ENCODE measurements at regions of chr16 and their contacts with region 1.

Region 1: DNA sequence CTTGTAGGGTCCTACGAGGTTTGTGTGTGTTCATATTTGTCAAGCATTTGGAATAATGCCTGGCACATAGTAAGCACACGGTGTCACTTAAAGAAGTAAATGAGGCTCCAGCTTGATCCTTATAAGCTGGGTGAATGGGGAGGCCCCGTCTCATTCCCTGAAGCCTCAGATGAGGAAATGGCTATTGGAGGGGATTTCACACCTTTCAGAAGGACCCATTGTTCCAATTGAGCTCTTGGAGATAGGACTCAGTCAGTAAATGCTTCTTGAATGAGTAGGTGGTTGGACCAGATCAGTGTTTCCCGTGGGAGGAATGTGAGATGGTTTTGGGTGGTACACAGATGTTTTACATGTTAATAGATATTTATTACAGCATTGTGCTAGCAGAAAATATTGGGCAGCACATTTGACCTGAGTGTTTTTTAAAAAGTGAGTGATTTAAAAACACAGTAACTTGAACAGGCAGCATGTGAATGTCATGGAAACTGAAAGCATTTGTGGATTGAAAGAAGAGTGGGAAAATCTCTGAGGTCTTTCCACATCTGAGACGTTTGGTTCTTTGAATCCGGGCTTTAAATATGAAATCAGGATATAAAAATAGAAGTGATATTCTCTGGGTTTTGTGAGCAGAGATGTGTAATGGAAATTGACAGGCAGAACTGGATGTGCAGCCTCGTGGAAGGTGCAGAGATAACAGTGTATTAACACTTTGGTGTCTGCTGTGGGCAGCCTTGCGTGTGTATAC is 36.4 kb upstream of the ARHGAP17 start:
- DNase-seq: no peak
- CTCF ChIP-seq: no peak

Region 2: DNA sequence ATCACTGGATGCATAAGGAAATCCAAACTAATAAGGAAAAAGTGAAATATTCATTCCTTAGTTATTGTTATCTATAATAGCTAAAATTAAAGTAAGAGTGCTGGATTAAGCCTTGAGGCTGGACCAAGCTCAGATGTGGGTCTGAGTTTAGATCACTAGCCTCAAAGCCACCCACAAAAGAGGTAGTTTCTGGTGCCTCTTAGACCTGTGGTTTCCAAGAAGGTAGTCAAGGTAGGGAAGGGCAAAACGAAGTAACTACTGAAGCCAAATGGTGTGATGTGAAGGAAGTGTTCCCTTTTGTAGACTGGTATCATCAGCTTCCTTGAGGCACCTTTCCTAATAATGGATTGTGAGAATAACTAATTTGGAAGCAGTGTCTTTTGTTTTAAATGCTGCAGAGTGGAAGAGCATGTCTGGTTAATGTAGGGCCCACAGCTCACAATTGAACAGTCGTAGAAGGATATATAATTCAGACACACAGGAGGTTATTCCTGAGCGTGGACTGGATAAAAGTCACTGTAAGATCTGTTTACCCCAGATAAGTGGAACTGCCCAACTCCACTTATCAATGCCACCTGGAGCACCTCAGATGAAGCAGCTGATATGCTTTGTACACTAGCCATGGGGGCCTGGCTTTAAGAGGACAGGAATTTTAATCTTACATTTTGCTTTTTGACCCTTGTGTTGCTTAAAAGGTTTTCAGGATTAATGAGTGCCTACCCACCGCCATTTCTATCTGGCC is 28.2 kb after region 1 on chr16:
- CTCF ChIA-PET with region 1: no interaction called
- POLR2A ChIA-PET with region 1: no interaction called
- DNase-seq: no peak
- CTCF ChIP-seq: no peak

Region 3: DNA sequence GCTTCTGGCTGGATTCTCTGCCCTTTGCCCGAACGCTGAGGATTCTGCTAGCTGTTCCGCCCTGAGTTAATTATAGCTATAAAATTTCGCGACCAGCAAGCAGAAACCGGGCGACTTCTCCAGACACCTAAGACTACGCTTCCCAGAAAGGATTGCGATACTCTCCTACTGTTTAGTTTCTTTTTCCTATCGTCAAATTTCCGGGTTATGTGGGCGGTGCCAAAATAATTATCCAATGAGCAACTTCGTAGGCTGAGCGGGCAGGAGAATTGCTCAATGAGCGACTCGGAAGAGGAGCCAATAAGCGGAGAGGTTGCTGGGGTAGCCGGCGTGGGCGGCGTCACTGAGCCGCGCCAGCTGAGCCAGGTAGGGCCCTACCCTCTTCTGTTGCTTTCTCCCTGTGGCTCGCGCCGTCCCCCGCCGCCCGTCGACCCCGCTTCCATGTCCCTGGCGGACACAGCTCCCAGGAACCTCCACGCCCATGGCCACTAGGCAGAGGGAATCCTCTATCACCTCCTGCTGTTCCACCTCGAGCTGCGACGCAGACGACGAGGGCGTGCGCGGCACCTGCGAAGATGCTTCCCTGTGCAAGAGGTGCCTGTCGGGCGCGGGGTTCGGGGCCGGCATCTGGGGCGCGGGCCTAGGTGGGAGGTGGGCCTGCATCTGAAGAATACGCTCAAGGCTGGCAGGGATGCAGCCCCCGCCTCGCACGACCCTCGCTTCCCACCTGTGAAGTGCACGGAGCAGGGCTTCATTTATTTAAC is 60.0 kb after region 1 on chr16 and contains the start of gene LCMT1:
- CTCF ChIA-PET with region 1: interaction called, 16 read pairs
- POLR2A ChIA-PET with region 1: interaction called, 3 read pairs
- DNase-seq: peak; percentile 96
- CTCF ChIP-seq: no peak

Region 4: DNA sequence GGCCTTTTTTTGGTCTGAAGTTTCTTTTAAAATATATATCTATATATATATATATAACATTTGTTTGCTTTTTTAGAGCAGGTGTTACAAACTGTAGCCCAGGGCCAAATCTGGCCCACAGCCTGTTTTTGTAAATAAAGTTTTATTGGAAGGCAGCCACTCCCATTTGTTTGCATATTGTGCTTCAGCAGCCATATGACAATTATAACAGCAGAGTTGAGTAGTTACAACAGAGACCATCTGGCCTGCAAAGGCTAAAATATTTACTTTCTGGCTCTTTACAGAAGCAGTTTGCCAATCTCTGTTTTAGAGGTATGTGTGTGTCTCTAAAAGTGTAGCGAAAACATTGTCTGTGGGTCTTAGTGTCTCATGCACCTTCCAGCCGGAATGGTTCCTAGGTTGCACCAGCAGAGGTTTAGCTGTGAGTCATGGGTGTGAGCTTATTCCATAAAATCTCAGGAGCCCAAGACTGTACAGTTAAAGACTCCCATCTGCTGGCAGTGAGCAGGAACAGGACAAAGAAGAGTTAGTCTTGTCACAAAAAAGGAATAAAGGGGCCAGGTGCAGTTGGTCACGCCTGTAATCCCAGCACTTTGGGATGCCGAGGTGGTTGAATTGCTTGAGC is 83.8 kb after region 1 on chr16:
- CTCF ChIA-PET with region 1: interaction called, 4 read pairs
- POLR2A ChIA-PET with region 1: interaction called, 13 read pairs
- DNase-seq: no peak
- CTCF ChIP-seq: no peak

Region 5: DNA sequence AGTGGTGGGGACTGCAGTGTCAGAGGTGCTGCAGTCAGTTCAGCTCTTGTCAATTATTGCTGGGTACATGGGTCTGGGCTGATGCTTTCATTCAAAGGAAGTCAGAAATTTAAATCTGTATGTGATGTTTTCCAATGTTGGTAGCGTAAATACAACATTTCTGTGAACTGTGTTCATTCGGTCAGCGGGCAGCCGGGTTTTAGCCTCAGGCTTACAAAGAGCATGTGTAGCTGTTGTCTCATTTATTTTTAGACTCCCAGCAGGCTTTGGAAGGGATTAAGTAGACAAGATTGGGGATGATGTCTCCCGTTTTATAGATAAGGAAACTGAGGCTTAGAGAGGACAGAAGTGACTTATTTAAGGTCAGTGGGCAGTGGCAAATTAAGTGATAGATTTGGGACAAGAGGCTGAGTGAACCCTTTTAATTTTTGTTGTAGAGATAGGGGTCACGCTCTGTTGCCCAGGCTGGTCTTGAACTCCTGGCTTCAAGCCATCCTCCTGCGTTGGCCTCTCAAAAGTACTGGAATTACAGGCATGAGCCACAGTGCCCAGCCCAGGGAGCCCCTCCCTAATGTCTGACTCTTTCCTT is 173.2 kb after region 1 on chr16:
- CTCF ChIA-PET with region 1: interaction called, 15 read pairs
- POLR2A ChIA-PET with region 1: no interaction called
- DNase-seq: no peak
- CTCF ChIP-seq: no peak